ENCODE measurements at regions of chr6 and their contacts with region 1.

Region 1: GRCh38 chr6:156807028-156807427 is 29.9 kb downstream of the ARID1B start:
- DNase-seq: no peak
- H3K4me3 ChIP-seq: no peak overlapping the region
- H3K27ac ChIP-seq: no peak overlapping the region
- H3K4me1 ChIP-seq: no peaks in the 10 kb centered on the region
- H3K27me3 ChIP-seq: no peaks in the 10 kb centered on the region
- CTCF ChIP-seq: no peak
- POLR2A ChIP-seq: no peak

Region 2: GRCh38 chr6:156791320-156791850 is 15.6 kb before region 1 on chr6:
- CTCF ChIA-PET with region 1: interaction called, 18 read pairs
- POLR2A ChIA-PET with region 1: no interaction called
- dilution Hi-C with region 1: no loop called
- intact Hi-C with region 1: no loop called
- DNase-seq: peak; percentile 65
- H3K4me3 ChIP-seq: no peak overlapping the region
- H3K27ac ChIP-seq: no peak overlapping the region
- H3K4me1 ChIP-seq: peaks cover 7% of the 10 kb centered on the region
- H3K27me3 ChIP-seq: no peaks in the 10 kb centered on the region
- CTCF ChIP-seq: no peak
- POLR2A ChIP-seq: no peak

Region 3: DNA sequence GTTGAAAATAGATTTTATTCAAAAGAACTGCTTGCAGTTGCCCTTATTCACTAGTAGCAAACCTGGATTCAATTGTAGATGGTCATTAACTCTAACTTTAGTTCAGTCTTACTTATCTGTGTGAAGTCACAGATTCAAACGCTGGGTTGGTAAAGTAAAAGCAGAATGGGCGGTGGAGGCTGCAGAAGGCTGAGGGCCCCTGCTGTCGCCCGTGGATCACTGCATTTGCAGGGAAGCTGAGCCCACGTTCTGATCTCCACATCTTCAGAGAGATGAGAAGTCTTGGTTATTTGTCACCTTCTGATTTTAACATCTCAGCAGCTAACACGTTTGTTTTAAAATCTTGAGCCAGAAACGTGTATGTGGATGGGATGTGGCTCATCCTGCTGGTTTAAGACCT is 1091.1 kb after region 1 on chr6:
- CTCF ChIA-PET with region 1: no interaction called
- POLR2A ChIA-PET with region 1: no interaction called
- dilution Hi-C with region 1: no loop called
- intact Hi-C with region 1: no loop called
- DNase-seq: peak; percentile 15
- H3K4me3 ChIP-seq: no peak overlapping the region
- H3K27ac ChIP-seq: no peak overlapping the region
- H3K4me1 ChIP-seq: no peaks in the 10 kb centered on the region
- H3K27me3 ChIP-seq: no peaks in the 10 kb centered on the region
- CTCF ChIP-seq: peak in 1 of 2 donors; percentile 21
- POLR2A ChIP-seq: no peak

Measured in endothelial cell of umbilical vein (primary cell).